PC-3 (cell line): ENCODE measurements at regions of chr2 and their contacts with region 1.

Region 1: GRCh38 chr2:3303583-3304406 is 73.8 kb downstream of the EIPR1 start:
- DNase-seq: peak; percentile 85
- ATAC-seq: peak; percentile 100
- H3K4me3 ChIP-seq: no peak overlapping the region
- H3K27ac ChIP-seq: no peak overlapping the region
- H3K4me1 ChIP-seq: peaks cover 4% of the 10 kb centered on the region; the same call in 1 of the 2 replicates
- H3K27me3 ChIP-seq: no peaks in the 10 kb centered on the region
- CTCF ChIP-seq: peak; percentile 94

Region 2: GRCh38 chr2:1886405-1886992 is 1417.3 kb before region 1 on chr2:
- CTCF ChIA-PET with region 1: no interaction called
- POLR2A ChIA-PET with region 1: no interaction called
- intact Hi-C with region 1: loop called (anchors 5 kb)
- DNase-seq: peak; percentile 73
- ATAC-seq: peak; percentile 78
- H3K4me3 ChIP-seq: no peak overlapping the region
- H3K27ac ChIP-seq: no peak overlapping the region
- H3K4me1 ChIP-seq: no peaks in the 10 kb centered on the region
- H3K27me3 ChIP-seq: peaks cover 73% of the 10 kb centered on the region
- CTCF ChIP-seq: peak; percentile 92

Region 3: GRCh38 chr2:3198119-3198518 is 105.7 kb before region 1 on chr2:
- CTCF ChIA-PET with region 1: no interaction called
- POLR2A ChIA-PET with region 1: no interaction called
- intact Hi-C with region 1: loop called (anchors 2 kb)
- DNase-seq: no peak
- ATAC-seq: peak; percentile 38
- H3K4me3 ChIP-seq: no peak overlapping the region
- H3K27ac ChIP-seq: no peak overlapping the region
- H3K4me1 ChIP-seq: no peaks in the 10 kb centered on the region
- H3K27me3 ChIP-seq: no peaks in the 10 kb centered on the region
- CTCF ChIP-seq: peak; percentile 42; the same call in 1 of the 2 replicates